Activated naive CD4-positive, alpha-beta T cell treated with anti-CD3 and anti-CD28 coated beads for 36 hours (primary cell): ENCODE measurements at regions of chr9 and their contacts with region 1.

Region 1: GRCh38 chr9:128688512-128689292 is at the start of gene SET:
- DNase-seq: peak; percentile 91
- H3K4me3 Mint-ChIP-seq: peak within 1 kb of the TSS; percentile 78
- H3K27ac Mint-ChIP-seq: peak within 1 kb of the TSS; percentile 91
- H3K4me1 Mint-ChIP-seq: peaks cover 61% of the 10 kb centered on the region
- H3K27me3 Mint-ChIP-seq: no peaks in the 10 kb centered on the region
- total RNA-seq, gene SET: 669 to 771 TPM

Region 2: DNA sequence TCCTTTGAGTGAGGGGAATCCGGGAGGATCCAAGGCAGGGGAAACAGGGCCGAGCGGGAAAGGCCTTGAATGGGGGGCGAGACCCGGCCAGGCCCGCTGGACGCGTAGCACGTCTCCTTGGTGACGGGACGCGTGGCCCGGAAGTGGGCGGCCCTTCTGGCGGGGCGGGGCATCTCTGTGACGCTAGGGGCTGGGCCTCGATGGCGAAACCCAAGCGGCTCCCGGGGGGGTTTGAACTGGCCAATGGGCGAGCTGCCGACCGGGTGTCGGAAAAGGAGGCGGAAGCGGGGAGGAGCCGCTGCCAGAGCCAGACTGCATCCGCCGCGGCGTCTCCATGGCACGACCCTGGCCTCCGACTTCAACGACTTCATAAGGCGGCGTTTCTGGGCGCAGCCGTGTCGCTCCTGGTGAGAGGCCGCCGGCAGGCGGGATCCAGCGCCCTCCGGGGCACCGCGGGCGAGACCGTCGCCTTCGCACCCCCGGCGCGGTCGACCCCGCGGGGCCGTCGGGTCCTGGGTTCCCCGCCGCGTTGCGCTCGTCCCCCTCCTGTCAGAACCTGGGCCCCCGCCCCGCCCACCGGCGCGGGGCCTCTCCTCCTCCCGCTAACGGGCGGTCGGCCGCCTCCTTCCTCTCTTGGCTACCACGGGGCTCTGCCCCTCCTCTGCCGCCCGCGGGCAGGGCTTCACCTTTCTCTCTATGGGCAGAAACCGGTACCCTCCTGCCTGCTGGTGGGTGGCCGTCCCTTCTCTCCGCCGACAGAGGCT is 232.7 kb before region 1 on chr9 and contains the start of gene ODF2:
- CTCF ChIA-PET with region 1: no interaction called
- intact Hi-C with region 1: loop called (anchors 2 kb)
- DNase-seq: peak; percentile 99
- H3K4me3 Mint-ChIP-seq: peak within 1 kb of the TSS; percentile 90
- H3K27ac Mint-ChIP-seq: peak within 1 kb of the TSS; percentile 84
- H3K4me1 Mint-ChIP-seq: peaks cover 15% of the 10 kb centered on the region
- H3K27me3 Mint-ChIP-seq: no peaks in the 10 kb centered on the region
- total RNA-seq, gene ODF2: 73.6 to 73.7 TPM

Region 3: DNA sequence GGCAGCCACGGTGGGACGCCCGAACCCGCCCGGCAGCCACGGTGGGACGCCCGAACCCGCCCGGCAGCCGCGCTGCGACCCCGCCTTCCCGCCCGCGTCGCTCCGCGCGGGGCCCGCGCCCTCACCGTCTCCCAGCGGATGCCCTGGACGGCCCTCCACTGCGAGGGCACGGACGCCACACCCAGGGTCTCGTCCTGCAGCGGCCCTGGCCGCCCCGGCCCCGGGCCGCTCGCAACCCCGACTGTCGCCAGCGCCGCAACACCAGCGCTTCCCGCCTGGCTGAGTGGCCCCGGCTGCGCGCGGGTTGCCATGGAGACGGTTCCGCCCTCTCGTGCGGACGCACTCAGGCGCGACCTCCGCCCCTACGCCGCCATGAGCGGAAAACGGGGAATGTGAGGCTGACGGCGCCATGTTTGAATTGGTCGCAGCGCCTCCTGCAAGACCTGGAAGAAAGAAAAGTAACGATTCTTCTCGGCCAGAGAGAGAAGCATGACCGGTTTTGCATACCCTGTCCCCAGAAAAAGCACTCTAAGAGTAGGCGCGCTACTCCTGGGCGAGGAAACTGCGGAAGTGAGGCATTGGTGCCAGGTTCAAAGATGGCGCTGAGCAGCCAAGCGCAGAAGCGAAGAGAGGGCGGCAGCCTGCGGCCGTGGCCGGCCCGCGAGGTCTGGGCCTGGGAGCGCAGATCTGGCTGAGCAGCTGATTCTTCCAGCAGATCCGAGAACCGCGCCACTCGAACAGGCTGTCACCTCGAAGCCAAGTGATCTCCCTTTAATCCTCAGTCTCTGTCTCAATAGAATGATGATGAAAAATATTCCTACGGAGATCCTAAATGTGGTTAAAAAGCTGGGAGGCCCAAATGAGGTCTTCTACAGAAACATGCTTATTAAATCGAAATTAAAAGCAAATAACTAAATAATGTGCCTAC is 32.0 kb before region 1 on chr9 and contains the start of gene DYNC2I2:
- CTCF ChIA-PET with region 1: no interaction called
- intact Hi-C with region 1: loop called (anchors 1 kb)
- DNase-seq: peak; percentile 97
- H3K4me3 Mint-ChIP-seq: peak within 1 kb of the TSS; percentile 93
- H3K27ac Mint-ChIP-seq: peak within 1 kb of the TSS; percentile 100
- H3K4me1 Mint-ChIP-seq: peaks cover 11% of the 10 kb centered on the region
- H3K27me3 Mint-ChIP-seq: no peaks in the 10 kb centered on the region
- total RNA-seq, gene DYNC2I2: 32.4 to 32.8 TPM

Region 4: DNA sequence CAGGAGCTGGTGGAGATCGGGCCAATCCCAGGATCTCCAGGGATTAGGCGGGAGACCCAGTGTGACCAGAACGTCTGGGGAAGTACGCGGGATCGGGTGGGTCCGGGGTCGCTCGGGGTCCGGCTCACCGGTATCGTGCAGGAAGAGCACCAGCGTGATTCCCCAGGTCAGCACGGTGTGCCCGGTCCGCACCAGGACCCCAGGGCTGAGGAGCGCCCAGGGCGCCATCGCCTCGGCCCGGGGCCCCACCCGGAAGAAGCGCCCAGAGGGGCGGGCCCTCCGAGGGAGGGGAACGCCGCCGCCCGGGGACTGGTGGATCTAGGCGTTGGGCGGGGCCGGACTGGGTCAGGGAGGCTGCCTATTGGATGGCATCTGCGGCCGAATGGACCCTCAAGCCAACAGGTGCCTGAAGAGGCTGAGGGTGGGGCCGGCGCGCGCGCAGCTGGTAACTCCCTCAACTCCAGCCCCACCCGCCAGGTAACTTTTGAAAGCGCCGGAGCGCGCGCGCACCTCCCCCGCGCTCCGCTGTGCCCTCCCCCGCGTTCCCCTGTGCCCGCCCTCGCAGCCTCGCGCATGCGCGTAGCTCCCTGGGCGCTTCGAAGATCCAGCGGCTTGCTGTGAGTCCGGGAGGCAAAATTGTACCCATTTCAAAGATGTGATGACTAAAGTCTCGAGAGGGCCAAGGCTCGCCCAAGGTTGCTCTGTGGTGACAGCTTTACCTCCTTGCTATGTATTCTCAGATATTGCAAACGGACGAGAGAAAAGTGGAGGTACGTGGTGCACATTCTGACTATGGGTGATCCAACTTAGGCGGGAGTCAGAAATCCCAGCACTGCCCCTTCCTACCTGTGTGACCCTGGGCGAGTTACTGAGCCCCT is 35.4 kb after region 1 on chr9 and contains the start of gene ZDHHC12:
- CTCF ChIA-PET with region 1: no interaction called
- intact Hi-C with region 1: loop called (anchors 1 kb)
- DNase-seq: peak; percentile 100
- H3K4me3 Mint-ChIP-seq: peak within 1 kb of the TSS; percentile 97
- H3K27ac Mint-ChIP-seq: peak within 1 kb of the TSS; percentile 94
- H3K4me1 Mint-ChIP-seq: peaks cover 28% of the 10 kb centered on the region
- H3K27me3 Mint-ChIP-seq: no peaks in the 10 kb centered on the region
- total RNA-seq, gene ZDHHC12: 50.9 to 53.1 TPM

Region 5: DNA sequence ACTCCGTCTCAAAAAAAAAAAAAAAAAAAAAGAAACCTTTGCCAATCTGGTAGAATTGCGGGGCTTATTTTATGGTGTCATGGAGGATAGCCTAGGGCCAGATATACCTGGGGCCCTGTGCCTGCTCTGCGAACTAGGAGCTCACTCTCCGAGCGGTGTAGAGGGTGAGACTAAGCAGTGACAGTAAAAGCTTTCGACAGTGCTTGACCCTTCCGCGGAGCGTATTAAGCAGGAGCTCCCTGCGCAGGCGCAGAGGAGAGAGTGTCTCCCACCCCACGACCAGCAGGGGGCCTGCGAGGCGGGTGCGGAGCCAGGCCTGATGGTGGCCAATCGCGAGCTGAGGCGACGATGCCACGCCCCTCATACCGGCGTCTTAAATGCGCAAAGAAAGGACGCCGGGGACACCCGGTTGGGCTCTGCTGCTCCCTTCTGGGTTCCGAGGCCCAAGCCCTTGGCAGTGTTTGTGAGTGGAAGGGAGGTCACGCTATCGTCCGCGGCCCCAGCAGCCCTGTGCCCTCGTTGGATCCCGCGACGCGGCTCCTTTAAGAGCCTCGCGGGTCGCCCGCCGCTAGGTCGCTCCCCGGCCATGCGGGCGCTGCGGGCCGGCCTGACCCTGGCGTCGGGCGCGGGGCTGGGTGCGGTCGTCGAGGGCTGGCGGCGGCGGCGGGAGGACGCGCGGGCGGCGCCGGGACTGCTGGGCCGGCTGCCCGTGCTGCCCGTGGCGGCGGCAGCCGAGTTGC is 129.6 kb after region 1 on chr9 and contains the start of gene ENDOG:
- CTCF ChIA-PET with region 1: no interaction called
- intact Hi-C with region 1: loop called (anchors 2 kb)
- DNase-seq: peak; percentile 98
- H3K4me3 Mint-ChIP-seq: peak within 1 kb of the TSS; percentile 82
- H3K27ac Mint-ChIP-seq: peak within 1 kb of the TSS; percentile 24
- H3K4me1 Mint-ChIP-seq: peaks cover 22% of the 10 kb centered on the region
- H3K27me3 Mint-ChIP-seq: no peaks in the 10 kb centered on the region
- total RNA-seq, gene ENDOG: 9.9 to 10.3 TPM

Region 6: DNA sequence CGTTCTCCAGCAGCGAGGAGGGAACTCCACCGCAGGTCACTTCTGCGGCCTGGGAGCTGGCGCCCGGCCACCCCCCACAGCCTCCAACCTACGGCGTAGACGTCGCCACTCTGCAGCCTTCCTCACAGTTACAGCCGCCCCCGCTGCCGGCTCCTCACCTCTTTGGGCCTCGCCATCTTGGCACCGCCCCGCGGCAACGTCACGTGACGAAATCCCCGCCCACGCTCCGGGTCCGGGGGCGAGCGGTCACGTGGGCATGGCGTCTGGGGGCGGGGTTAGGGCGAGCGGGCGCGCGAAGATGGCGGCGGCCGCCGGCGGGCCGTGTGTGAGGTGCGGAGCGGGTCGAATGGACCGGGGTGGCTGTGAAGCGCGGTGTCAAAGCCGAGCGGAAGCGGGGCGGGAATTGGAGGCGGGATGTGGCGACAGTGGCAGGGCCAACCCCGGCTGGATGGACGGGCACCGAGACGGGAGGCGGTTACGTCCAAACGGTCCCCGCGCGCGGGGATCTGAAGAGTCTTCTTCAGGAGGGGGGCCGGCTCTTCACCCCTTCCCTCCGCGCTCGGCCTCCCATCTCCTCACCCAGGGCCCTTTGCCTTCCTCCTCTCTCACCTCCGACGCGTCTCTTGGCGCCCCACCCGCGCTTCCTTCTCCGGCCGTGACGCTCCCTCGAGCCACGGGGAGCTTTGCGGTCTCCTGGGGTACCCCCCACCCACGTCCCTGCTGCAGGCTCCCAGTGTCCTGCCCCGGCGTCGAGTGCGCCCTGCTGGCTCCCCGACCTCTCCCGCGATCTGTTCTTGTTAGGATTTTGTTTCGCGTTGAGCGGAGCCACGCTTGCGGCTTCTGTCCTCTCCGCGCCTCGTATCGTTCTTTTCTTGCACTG is 259.0 kb after region 1 on chr9 and contains the starts of genes DOLK and NUP188:
- CTCF ChIA-PET with region 1: no interaction called
- intact Hi-C with region 1: loop called (anchors 1 kb)
- DNase-seq: peak; percentile 98
- H3K4me3 Mint-ChIP-seq: peak within 1 kb of the TSS; percentile 97
- H3K27ac Mint-ChIP-seq: peak within 1 kb of the TSS; percentile 94
- H3K4me1 Mint-ChIP-seq: peaks cover 33% of the 10 kb centered on the region
- H3K27me3 Mint-ChIP-seq: no peaks in the 10 kb centered on the region
- total RNA-seq, gene DOLK: 2.5 to 2.7 TPM
- total RNA-seq, gene NUP188: 101 to 112 TPM

Region 7: DNA sequence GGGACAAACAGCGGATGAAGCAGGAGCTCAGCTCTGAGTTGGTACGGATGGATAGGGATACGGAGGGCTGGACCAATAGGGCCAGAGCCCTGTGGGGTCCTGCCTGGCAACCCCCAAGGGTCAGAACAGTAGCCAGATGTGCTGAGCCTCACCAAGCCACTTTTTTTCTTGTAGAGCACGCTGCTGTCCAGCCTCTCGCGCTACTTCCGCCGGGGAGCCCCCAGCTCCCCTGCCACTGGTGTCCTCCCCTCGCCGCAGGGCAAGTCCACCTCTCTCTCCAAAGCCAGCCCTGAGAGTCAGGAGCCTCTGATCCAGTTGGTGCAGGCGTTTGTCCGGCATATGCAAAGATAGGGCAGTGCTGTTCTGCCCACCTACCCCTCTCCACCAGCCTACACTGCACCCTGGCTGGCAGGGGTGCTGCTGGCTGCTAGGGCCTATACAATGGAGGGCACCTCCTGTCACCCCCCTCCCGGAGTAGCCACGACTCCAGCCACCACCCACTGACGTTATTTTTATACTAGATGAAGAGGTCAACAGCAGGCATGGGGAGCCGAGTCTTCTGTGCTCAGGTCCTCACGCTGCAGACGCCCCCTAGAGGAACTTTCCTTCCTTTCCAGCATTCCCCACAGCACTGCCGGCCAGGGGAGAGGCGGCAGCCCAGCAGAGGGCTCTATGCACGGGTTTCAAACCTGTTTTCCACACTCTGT is 317.8 kb after region 1 on chr9:
- CTCF ChIA-PET with region 1: no interaction called
- intact Hi-C with region 1: no loop called
- DNase-seq: peak; percentile 63
- H3K4me3 Mint-ChIP-seq: no peak overlapping the region
- H3K27ac Mint-ChIP-seq: no peak overlapping the region
- H3K4me1 Mint-ChIP-seq: no peaks in the 10 kb centered on the region
- H3K27me3 Mint-ChIP-seq: no peaks in the 10 kb centered on the region